WTC11 (cell line): ENCODE measurements at regions of chr2 and their contacts with region 1.

Region 1: DNA sequence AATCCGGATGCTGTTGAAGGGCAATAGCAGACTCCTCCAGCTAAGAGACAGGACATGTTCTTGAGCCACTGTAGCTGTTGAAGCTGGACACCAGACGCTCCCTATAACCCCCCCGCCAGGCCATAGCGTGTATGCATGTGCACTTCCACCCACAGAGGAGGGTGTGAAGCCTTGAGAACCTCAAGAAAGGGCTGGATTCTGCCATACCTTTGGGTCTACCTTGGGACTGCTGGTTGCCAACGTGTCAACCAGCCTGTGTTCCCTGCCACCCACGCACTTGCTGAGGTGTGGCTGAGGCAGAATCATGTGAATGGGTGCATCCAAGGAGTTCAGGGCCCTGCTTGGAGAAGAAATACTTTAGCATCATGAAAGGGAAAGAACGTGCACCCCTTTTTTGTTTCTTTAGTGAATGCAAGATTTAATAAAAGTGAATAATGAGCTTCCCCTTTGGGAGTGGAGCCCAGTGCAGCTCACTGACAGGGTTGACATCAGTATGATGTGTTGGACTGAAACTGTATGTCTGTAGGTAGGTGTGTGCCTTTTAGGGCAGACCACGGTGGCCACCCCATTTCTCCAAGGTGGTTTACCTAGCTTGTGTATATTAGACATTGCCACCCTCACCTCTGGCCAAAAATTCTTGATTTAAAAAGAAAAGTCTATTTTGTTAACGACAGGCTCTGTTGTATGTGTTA is 198.3 kb downstream of the MGAT5 start:
- DNase-seq: no peak
- ATAC-seq: no peak
- H3K4me3 Mint-ChIP-seq: no peak overlapping the region
- H3K27ac Mint-ChIP-seq: no peak overlapping the region
- H3K4me1 Mint-ChIP-seq: peaks cover 10% of the 10 kb centered on the region
- H3K27me3 Mint-ChIP-seq: no peaks in the 10 kb centered on the region
- CTCF ChIP-seq: no peak

Region 2: GRCh38 chr2:134118279-134119116 is 333.7 kb before region 1 on chr2:
- CTCF ChIA-PET with region 1: interaction called, 43 read pairs
- POLR2A ChIA-PET with region 1: no interaction called
- DNase-seq: peak; percentile 78
- ATAC-seq: peak; percentile 40
- H3K4me3 Mint-ChIP-seq: peak overlapping the region; percentile 92
- H3K27ac Mint-ChIP-seq: no peak overlapping the region
- H3K4me1 Mint-ChIP-seq: peaks cover 34% of the 10 kb centered on the region
- H3K27me3 Mint-ChIP-seq: peaks cover 11% of the 10 kb centered on the region
- CTCF ChIP-seq: 0 out of 2 replicates have a peak, but pooled peaks have one; percentile 18

Region 3: GRCh38 chr2:134327367-134327766 is 124.8 kb before region 1 on chr2:
- CTCF ChIA-PET with region 1: no interaction called
- POLR2A ChIA-PET with region 1: no interaction called
- DNase-seq: no peak
- ATAC-seq: no peak
- H3K4me3 Mint-ChIP-seq: no peak overlapping the region
- H3K27ac Mint-ChIP-seq: no peak overlapping the region
- H3K4me1 Mint-ChIP-seq: no peaks in the 10 kb centered on the region; the same call in 1 of the 2 replicates
- H3K27me3 Mint-ChIP-seq: no peaks in the 10 kb centered on the region
- CTCF ChIP-seq: no peak

Region 4: GRCh38 chr2:134368009-134368817 is 84.0 kb before region 1 on chr2:
- CTCF ChIA-PET with region 1: interaction called, 22 read pairs
- POLR2A ChIA-PET with region 1: no interaction called
- DNase-seq: no peak
- ATAC-seq: no peak
- H3K4me3 Mint-ChIP-seq: no peak overlapping the region
- H3K27ac Mint-ChIP-seq: no peak overlapping the region
- H3K4me1 Mint-ChIP-seq: peaks cover 2% of the 10 kb centered on the region
- H3K27me3 Mint-ChIP-seq: no peaks in the 10 kb centered on the region
- CTCF ChIP-seq: no peak

Region 5: DNA sequence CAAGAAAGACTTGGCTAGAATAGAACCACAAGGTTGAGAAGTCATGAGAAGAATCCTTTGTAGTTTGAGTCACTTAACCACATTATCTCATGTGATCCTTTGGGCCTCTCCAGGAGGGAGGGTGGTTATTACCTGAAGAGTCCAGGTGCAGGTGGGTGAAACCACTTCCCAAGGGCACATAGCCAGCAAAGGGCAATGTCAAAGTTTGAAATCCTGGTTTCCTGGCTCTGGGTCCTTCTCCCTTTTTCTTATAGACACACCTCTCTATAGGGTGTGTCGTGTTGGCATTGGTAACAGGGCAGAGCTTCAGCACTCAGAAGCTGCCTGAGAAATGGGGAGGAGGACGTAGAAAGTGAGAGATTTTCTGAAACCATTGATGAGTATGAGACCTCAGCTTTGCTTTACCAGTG is 60.4 kb before region 1 on chr2:
- CTCF ChIA-PET with region 1: interaction called, 23 read pairs
- POLR2A ChIA-PET with region 1: no interaction called
- DNase-seq: no peak
- ATAC-seq: no peak
- H3K4me3 Mint-ChIP-seq: no peak overlapping the region
- H3K27ac Mint-ChIP-seq: no peak overlapping the region
- H3K4me1 Mint-ChIP-seq: no peaks in the 10 kb centered on the region
- H3K27me3 Mint-ChIP-seq: no peaks in the 10 kb centered on the region
- CTCF ChIP-seq: no peak

Region 6: GRCh38 chr2:134420259-134420658 is 31.9 kb before region 1 on chr2:
- CTCF ChIA-PET with region 1: interaction called, 36 read pairs
- POLR2A ChIA-PET with region 1: no interaction called
- DNase-seq: no peak
- ATAC-seq: peak; percentile 87
- H3K4me3 Mint-ChIP-seq: no peak overlapping the region
- H3K27ac Mint-ChIP-seq: no peak overlapping the region
- H3K4me1 Mint-ChIP-seq: peaks cover 8% of the 10 kb centered on the region
- H3K27me3 Mint-ChIP-seq: no peaks in the 10 kb centered on the region
- CTCF ChIP-seq: no peak

Region 7: DNA sequence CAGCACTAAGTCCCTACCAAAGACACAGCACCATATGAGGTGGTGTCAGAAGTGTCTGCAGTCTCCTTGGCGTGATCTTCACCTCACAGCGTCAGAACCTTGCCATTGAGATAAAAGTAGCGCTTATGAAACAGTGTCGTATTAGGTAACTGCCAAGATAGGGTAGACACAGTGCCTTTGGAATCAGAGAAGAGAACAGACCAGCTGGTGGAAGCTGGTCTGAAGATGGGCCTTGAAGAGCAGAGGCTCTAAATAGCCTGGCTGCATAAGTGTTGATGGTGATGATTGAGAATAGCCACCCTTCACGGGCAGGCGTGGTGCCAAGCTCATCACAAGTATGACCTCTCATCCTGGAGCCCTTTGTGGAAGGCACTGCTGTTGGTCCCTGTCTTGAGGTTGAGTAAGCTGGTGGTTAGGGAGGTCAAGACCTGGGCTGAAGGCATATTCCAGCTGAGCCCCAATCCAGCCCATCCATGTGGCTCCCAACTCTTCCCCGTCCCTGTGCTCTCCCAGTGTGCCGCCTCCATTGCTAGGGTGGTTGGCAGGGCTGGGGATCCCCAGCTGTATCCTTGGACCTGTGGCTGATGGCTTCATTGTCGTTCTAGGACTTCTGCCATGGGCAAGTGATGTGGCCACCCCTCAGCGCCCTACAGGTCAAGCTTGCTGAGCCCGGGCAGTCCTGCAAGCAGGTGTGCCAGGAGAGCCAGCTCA is 10.9 kb before region 1 on chr2:
- CTCF ChIA-PET with region 1: interaction called, 26 read pairs
- POLR2A ChIA-PET with region 1: no interaction called
- DNase-seq: no peak
- ATAC-seq: no peak
- H3K4me3 Mint-ChIP-seq: no peak overlapping the region
- H3K27ac Mint-ChIP-seq: no peak overlapping the region
- H3K4me1 Mint-ChIP-seq: peaks cover 9% of the 10 kb centered on the region
- H3K27me3 Mint-ChIP-seq: no peaks in the 10 kb centered on the region
- CTCF ChIP-seq: no peak